Activated CD4-positive, alpha-beta T cell treated with anti-CD3 and anti-CD28 coated beads for 36 hours (primary cell): ENCODE measurements at regions of chr19 and their contacts with region 1.

Region 1: DNA sequence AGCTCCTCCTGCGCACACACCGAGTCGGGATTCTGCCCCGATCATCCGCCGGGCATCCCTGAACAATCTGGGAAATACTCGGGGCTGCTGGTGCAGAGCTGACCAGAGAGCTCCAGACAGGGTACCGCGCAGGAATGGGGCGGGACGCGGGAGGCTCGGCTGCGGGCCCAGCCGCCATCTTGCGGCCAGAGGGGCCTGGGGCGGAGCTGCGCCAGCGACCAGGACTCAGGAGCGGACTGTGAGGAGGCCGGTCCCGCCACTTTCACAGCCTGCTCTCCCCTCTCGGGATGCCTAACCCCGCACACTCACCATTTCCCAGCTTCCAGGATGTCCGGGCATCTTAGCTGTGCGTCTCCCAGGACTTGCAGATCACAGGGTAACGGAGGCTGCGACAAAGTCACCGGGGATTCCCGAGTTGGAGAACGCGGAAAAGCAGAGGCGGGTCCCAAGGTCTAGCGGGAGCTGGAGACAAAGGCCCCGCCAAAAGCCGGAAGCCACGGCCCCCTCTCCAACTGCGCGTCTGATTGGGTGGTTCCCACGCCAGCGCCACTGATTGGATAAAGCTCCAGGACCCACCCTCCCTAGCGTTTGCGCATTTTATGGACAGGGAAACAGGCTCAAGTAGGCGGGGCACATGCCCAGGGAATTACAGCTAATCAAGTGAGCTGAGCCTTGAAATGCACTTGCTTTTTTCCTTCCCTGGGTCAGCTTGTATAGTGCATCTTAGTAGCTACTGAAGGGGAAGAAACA is 15.8 kb upstream of the ZNF43 start:
- DNase-seq: peak; percentile 96
- ATAC-seq: peak; percentile 98
- H3K4me3 Mint-ChIP-seq: peak overlapping the region; percentile 88
- H3K27ac Mint-ChIP-seq: peak overlapping the region; percentile 88
- H3K4me1 Mint-ChIP-seq: peaks cover 30% of the 10 kb centered on the region
- H3K27me3 Mint-ChIP-seq: no peaks in the 10 kb centered on the region

Region 2: GRCh38 chr19:20999731-21000352 is 851.9 kb before region 1 on chr19:
- CTCF ChIA-PET with region 1: no interaction called
- POLR2A ChIA-PET with region 1: no interaction called
- intact Hi-C with region 1: loop called in 1 of 2 experiments (anchors 5 kb)
- DNase-seq: peak; percentile 95
- ATAC-seq: peak; percentile 100
- H3K4me3 Mint-ChIP-seq: peak overlapping the region; percentile 89
- H3K27ac Mint-ChIP-seq: peak overlapping the region; percentile 91
- H3K4me1 Mint-ChIP-seq: peaks cover 9% of the 10 kb centered on the region
- H3K27me3 Mint-ChIP-seq: no peaks in the 10 kb centered on the region

Region 3: DNA sequence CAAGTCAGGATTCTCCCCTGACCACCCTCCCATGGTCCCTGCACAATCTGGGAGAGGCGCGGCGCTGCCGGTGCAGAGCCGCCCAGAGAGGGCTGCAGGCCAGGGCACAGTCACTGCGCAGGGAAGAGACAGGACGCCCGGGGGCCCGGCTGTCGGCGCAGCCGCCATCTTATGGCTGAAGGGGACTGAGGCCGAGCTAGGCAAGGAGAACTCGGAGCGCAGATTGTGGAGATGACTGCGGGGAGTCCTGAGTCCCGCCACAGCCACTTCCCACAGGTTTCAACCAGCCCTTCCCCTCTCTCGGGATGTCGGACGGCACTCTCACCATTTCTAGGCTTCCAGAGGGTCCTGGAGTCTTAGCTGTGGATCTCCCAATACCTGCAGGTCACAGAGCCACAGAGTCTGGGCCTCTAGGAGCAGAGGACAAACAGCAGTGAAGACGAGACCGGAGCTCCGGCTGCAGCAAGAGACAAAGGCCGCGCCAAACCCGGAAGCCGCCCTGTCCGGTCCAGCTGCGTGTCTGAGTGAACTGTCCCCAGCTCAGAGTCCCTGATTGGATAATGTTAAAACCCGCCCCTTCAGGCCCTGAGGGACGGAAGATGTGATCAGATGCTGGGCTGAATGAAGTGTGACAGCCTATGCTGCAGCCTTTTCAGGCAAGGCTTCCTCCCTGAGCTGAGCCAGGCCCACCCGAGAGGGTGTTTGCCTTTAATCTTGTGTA is 522.7 kb before region 1 on chr19 and contains the start of gene ZNF708:
- CTCF ChIA-PET with region 1: no interaction called
- POLR2A ChIA-PET with region 1: interaction called, 4 read pairs
- intact Hi-C with region 1: loop called in 1 of 2 experiments (anchors 10 kb)
- DNase-seq: peak; percentile 85
- ATAC-seq: peak; percentile 100
- H3K4me3 Mint-ChIP-seq: peak within 1 kb of the TSS; percentile 97
- H3K27ac Mint-ChIP-seq: peak within 1 kb of the TSS; percentile 100
- H3K4me1 Mint-ChIP-seq: peaks cover 33% of the 10 kb centered on the region
- H3K27me3 Mint-ChIP-seq: no peaks in the 10 kb centered on the region
- total RNA-seq, gene ZNF708: 11.7 to 11.8 TPM

Region 4: GRCh38 chr19:21568816-21569493 is 282.8 kb before region 1 on chr19:
- CTCF ChIA-PET with region 1: no interaction called
- POLR2A ChIA-PET with region 1: interaction called, 3 read pairs
- intact Hi-C with region 1: loop called in 1 of 2 experiments (anchors 1 kb)
- DNase-seq: peak; percentile 92
- ATAC-seq: peak; percentile 97
- H3K4me3 Mint-ChIP-seq: peak overlapping the region; percentile 86
- H3K27ac Mint-ChIP-seq: peak overlapping the region; percentile 100
- H3K4me1 Mint-ChIP-seq: peaks cover 29% of the 10 kb centered on the region
- H3K27me3 Mint-ChIP-seq: no peaks in the 10 kb centered on the region

Region 5: GRCh38 chr19:22052644-22053013 is 200.9 kb after region 1 on chr19:
- CTCF ChIA-PET with region 1: no interaction called
- POLR2A ChIA-PET with region 1: interaction called, 3 read pairs
- intact Hi-C with region 1: loop called in 1 of 2 experiments (anchors 1 kb)
- DNase-seq: peak; percentile 52
- ATAC-seq: peak; percentile 47
- H3K4me3 Mint-ChIP-seq: peak overlapping the region; percentile 90
- H3K27ac Mint-ChIP-seq: peak overlapping the region; percentile 93
- H3K4me1 Mint-ChIP-seq: peaks cover 5% of the 10 kb centered on the region
- H3K27me3 Mint-ChIP-seq: no peaks in the 10 kb centered on the region